Activated CD4-positive, alpha-beta memory T cell treated with anti-CD3 and anti-CD28 coated beads, Interleukin-2, amount 10 ng/mL, durations not matched to agents 7 days and 5 days (primary cell): ENCODE measurements at regions of chr21 and their contacts with region 1.

Region 1: GRCh38 chr21:32412162-32413014 is at the start of gene EVA1C:
- DNase-seq: peak; percentile 59
- H3K4me3 Mint-ChIP-seq: peak within 1 kb of the TSS; percentile 93
- H3K27ac Mint-ChIP-seq: peak within 1 kb of the TSS; percentile 80
- H3K4me1 Mint-ChIP-seq: peaks cover 30% of the 10 kb centered on the region
- H3K27me3 Mint-ChIP-seq: no peaks in the 10 kb centered on the region
- total RNA-seq, gene EVA1C: 5.0 to 6.3 TPM

Region 2: DNA sequence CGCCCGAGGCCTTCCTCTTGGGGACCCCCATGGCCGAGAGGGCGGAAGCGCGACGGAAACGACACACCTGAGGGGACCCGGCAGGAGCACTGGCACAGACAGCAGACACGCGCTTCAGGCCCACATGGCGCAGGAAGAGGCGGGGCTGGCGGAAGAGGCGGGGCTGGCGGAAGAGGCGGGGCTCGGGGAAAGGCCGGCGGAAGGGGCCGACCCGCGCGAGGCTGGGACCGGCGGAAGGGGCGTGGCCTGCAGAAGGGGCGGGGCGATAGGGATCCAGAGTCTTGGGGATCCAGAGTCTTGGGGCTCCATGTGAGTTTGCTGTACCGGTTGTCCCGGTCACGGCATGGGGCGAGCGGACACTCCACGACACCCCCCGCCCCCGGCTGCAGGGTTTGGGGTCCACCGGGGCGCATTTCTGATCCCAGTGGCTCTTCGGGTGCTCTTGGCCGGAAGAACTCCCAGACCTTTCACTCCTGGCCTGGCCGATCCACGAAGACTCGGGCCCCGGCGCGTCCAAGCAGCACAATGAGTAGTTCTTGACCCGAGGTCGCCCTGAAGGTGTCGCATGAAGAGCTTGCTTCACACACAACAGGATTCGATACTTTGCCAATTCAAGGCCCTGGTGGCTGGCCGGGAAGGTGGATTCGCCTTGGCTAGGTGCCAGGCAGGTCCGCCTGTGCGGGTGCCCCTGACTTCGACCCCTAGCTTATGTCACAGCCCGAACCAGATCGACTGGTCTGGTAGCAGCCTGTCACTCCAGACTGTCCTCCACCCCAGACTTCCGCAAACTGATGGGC is 19.3 kb before region 1 on chr21 and contains the start of gene URB1:
- CTCF ChIA-PET with region 1: no interaction called
- POLR2A ChIA-PET with region 1: interaction called, 17 read pairs
- DNase-seq: peak; percentile 94
- H3K4me3 Mint-ChIP-seq: peak within 1 kb of the TSS; percentile 79
- H3K27ac Mint-ChIP-seq: peak within 1 kb of the TSS; percentile 73
- H3K4me1 Mint-ChIP-seq: peaks cover 42% of the 10 kb centered on the region
- H3K27me3 Mint-ChIP-seq: peaks cover 2% of the 10 kb centered on the region
- total RNA-seq, gene URB1: 9.1 TPM

Region 3: DNA sequence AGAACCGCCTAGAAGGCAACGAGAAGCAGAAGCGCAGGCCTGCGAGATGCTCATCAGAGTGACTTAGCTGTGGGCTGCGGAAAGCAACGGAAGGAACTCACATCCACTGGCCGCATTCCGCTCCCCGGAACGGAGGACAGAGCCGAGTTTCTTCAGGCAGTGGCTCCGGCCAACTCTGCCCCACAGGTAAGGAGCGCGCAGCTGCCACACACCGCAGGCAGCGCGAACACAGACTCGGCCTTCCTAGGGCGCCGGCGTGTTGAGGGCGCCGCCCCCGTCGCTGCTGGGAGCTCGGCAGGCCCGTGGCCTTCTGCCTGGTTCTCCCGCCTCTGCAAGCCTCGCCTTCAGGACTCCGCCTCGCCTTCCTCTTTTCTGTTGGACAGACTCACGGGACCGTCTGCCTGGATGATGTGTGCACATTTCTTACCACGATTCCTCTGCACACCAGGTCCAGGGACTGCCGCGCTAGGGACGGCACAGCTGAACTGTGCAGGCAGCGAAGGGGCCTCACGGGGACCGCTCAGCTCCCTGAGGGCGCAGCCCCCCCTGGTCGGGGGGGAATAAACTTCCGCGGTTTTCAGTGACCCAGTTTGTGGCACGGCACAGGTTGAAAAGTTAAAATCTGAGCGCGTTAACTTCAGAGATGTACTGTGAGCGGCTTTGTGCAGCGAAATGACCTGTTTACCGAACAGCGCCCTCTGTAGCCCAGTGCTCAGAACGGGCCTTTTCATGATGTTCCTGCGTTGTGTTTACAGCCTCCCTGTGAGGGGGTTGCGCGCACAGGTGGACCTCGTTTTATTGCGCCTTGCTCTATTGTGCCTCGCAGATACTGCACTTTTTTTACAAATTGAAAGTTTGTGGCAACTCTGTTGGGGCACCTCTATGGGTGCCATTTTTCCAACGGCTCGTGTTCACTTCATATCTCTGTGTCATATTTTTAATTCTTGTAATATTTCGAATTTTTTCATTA is 157.2 kb after region 1 on chr21:
- CTCF ChIA-PET with region 1: interaction called, 4 read pairs
- POLR2A ChIA-PET with region 1: interaction called, 16 read pairs
- DNase-seq: peak; percentile 83
- H3K4me3 Mint-ChIP-seq: peak overlapping the region; percentile 78
- H3K27ac Mint-ChIP-seq: peak overlapping the region; percentile 77
- H3K4me1 Mint-ChIP-seq: peaks cover 22% of the 10 kb centered on the region
- H3K27me3 Mint-ChIP-seq: peaks cover 6% of the 10 kb centered on the region